GM10248 (cell line): ENCODE measurements at regions of chr22 and their contacts with region 1.

Region 1: DNA sequence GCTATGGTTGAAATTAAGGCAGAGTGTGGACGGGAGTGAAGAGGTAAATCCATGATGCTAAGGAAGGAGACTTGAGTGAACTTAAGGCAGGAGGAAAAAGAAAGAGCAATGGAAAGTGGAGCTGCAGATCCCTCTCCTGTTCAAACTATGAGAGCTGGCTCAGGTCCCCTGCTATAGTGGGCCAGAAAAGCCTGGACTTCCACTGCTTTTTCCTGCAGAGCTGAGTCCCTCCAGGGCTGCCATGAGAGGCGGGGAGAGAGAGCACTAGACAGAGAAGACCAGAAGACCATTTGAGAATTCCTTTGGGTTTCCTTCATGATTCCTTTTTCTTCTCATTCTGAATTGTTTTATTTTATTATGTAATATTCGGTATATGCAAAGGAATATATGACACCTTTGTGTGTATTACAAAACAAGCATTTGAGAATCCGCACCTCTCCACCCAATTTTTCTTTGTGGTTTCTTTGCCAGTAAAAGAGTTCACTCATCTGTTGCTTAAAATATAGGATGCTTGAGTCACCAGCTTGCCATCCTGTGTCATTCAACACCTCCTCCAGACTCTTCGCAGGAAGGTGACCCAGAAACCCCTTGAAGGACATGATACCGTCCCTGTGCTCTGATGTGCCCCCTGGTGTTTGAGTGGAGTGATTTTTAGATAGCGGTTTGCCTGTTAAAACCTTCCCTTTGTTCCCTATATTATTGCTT is 24.4 kb downstream of the SREBF2 start:
- DNase-seq: peak; percentile 62
- CTCF ChIP-seq: peak; percentile 55

Region 2: GRCh38 chr22:41832553-41833368 is 24.5 kb before region 1 on chr22 and contains the start of gene SREBF2:
- CTCF ChIA-PET with region 1: interaction called, 29 read pairs
- POLR2A ChIA-PET with region 1: interaction called, 13 read pairs
- DNase-seq: peak; percentile 99
- CTCF ChIP-seq: no peak

Region 3: GRCh38 chr22:41841085-41841659 is 16.1 kb before region 1 on chr22:
- CTCF ChIA-PET with region 1: interaction called, 53 read pairs
- POLR2A ChIA-PET with region 1: interaction called, 8 read pairs
- DNase-seq: no peak
- CTCF ChIP-seq: no peak

Region 4: GRCh38 chr22:41873391-41873790 is 16.1 kb after region 1 on chr22:
- CTCF ChIA-PET with region 1: interaction called, 14 read pairs
- POLR2A ChIA-PET with region 1: interaction called, 20 read pairs
- DNase-seq: no peak
- CTCF ChIP-seq: no peak

Region 5: DNA sequence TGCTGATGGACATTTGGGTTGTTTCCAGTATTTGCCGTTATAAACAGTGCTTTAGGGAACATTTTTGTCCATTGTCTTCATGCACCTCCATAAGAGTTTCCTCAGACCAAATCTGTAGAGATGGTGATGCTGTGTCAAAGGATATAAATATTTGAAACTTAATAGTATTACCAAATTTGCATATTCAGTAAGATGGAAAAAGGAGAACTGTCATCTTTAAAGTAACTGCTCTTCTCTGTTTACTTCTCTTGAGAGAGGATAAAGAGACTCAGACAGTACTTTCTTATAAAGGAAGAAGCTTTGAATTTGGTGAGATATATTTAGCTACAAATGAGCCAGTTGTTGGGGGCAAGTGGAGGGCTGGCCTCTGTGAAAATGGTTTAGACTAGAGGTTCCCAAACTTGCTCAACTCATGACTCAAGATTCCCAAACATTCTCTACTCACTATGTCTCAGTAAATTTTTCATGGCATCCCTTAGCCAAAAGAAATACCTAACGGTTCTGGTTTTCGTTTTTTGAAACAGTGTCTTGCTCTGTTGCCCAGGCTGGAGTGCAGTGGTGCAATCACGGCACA is 31.4 kb after region 1 on chr22:
- CTCF ChIA-PET with region 1: interaction called, 10 read pairs
- POLR2A ChIA-PET with region 1: no interaction called
- DNase-seq: no peak
- CTCF ChIP-seq: no peak

Region 6: GRCh38 chr22:41925655-41926460 is 68.6 kb after region 1 on chr22:
- CTCF ChIA-PET with region 1: interaction called, 22 read pairs
- POLR2A ChIA-PET with region 1: interaction called, 8 read pairs
- DNase-seq: peak; percentile 63
- CTCF ChIP-seq: peak; percentile 94

Region 7: GRCh38 chr22:42065438-42066125 is 208.3 kb after region 1 on chr22:
- CTCF ChIA-PET with region 1: no interaction called
- POLR2A ChIA-PET with region 1: no interaction called
- DNase-seq: no peak
- CTCF ChIP-seq: no peak